Right cardiac atrium (tissue), 5 donors: ENCODE measurements at regions of chr14 and their contacts with region 1.

Region 1: DNA sequence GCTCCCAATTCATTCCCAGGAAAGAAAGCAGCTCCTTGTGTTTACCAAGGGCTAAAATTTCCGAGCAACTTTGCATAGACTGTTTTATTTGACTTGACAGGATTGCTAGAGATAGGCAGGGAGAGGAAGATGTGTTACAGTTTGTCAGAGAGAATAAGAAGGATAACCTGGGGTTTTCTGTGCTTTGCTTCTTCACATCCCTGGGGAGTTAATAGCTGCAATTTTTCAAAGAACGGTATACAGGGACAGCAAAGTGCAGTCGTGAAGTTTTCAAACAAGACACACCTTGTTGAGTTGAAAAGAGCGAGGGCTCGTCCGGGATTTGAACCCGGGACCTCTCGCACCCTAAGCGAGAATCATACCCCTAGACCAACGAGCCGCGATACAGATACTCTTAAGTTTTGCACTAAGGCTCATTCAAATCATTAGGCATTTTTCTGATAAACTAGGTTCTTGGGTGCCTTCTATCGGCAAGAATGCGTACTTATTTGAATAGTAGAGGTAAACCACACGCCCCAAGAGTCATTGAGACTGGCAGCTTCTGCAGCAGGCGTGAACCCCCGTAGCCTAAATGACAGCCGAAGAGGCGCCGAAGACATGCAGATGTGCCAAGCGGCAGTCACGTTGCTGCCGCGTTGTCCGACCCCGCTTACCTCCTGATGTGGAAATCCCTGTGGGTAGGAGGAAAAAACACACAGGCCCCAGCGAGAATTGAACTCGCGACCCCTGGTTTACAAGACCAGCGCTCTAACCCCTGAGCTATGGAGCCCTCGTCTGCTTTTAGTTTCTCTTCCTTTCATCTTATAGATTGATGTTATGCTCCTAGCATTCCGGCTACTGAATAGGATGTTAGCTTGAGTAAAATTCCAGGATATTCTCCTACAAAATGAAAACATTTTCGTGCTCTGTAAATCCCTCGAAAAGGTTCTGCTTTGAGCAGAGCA is 22.2 kb upstream of the RNASE12 start:
- DNase-seq: peak; percentile 81 to 88 (median 85)
- ATAC-seq: peak; percentile 88 to 89
- H3K4me3 ChIP-seq: peak overlapping the region; percentile 67
- H3K27ac ChIP-seq: peak overlapping the region; percentile 89
- H3K4me1 ChIP-seq: no peaks in the 10 kb centered on the region
- H3K27me3 ChIP-seq: no peaks in the 10 kb centered on the region

Region 2: GRCh38 chr14:20327005-20327869 is 286.1 kb before region 1 on chr14:
- intact Hi-C with region 1: loop called in 2 of 4 experiments (anchors 5 to 10 kb)
- DNase-seq: no peak
- ATAC-seq: peak; percentile 47 to 59
- H3K4me3 ChIP-seq: peak overlapping the region; percentile 5
- H3K27ac ChIP-seq: no peak overlapping the region
- H3K4me1 ChIP-seq: no peaks in the 10 kb centered on the region
- H3K27me3 ChIP-seq: no peaks in the 10 kb centered on the region

Region 3: GRCh38 chr14:20343092-20343861 is 270.1 kb before region 1 on chr14 and contains the start of gene PARP2:
- intact Hi-C with region 1: loop called in 2 of 4 experiments (anchors 5 to 10 kb)
- DNase-seq: peak; percentile 98 to 99 (median 99)
- ATAC-seq: peak; percentile 99
- H3K4me3 ChIP-seq: peak within 1 kb of the TSS; percentile 99
- H3K27ac ChIP-seq: peak within 1 kb of the TSS; percentile 79
- H3K4me1 ChIP-seq: no peaks in the 10 kb centered on the region
- H3K27me3 ChIP-seq: no peaks in the 10 kb centered on the region
- total RNA-seq, gene PARP2: 11.9 to 17.9 (median 16.3) TPM

Region 4: GRCh38 chr14:20413045-20413799 is 200.1 kb before region 1 on chr14 and contains the start of gene TEP1:
- intact Hi-C with region 1: loop called in 3 of 4 experiments (anchors 5 to 10 kb)
- DNase-seq: peak; percentile 93 to 97 (median 95)
- ATAC-seq: peak; percentile 97 to 99
- H3K4me3 ChIP-seq: peak within 1 kb of the TSS; percentile 48
- H3K27ac ChIP-seq: peak within 1 kb of the TSS; percentile 85
- H3K4me1 ChIP-seq: peaks cover 2% of the 10 kb centered on the region
- H3K27me3 ChIP-seq: no peaks in the 10 kb centered on the region
- total RNA-seq, gene TEP1: 7.4 to 14.1 (median 13.1) TPM

Region 5: GRCh38 chr14:20530771-20531571 is 82.4 kb before region 1 on chr14:
- intact Hi-C with region 1: loop called in 1 of 4 experiments (anchors 10 kb)
- DNase-seq: peak; percentile 61 to 85 (median 77)
- ATAC-seq: no peak
- H3K4me3 ChIP-seq: no peak overlapping the region
- H3K27ac ChIP-seq: no peak overlapping the region
- H3K4me1 ChIP-seq: no peaks in the 10 kb centered on the region
- H3K27me3 ChIP-seq: no peaks in the 10 kb centered on the region

Region 6: GRCh38 chr14:20682435-20683124 is 69.2 kb after region 1 on chr14:
- intact Hi-C with region 1: loop called (anchors 2 to 5 kb)
- DNase-seq: peak; percentile 93 to 96 (median 95)
- ATAC-seq: peak; percentile 93 to 94
- H3K4me3 ChIP-seq: peak overlapping the region; percentile 81
- H3K27ac ChIP-seq: peak overlapping the region; percentile 99
- H3K4me1 ChIP-seq: peaks cover 6% of the 10 kb centered on the region
- H3K27me3 ChIP-seq: no peaks in the 10 kb centered on the region

Region 7: DNA sequence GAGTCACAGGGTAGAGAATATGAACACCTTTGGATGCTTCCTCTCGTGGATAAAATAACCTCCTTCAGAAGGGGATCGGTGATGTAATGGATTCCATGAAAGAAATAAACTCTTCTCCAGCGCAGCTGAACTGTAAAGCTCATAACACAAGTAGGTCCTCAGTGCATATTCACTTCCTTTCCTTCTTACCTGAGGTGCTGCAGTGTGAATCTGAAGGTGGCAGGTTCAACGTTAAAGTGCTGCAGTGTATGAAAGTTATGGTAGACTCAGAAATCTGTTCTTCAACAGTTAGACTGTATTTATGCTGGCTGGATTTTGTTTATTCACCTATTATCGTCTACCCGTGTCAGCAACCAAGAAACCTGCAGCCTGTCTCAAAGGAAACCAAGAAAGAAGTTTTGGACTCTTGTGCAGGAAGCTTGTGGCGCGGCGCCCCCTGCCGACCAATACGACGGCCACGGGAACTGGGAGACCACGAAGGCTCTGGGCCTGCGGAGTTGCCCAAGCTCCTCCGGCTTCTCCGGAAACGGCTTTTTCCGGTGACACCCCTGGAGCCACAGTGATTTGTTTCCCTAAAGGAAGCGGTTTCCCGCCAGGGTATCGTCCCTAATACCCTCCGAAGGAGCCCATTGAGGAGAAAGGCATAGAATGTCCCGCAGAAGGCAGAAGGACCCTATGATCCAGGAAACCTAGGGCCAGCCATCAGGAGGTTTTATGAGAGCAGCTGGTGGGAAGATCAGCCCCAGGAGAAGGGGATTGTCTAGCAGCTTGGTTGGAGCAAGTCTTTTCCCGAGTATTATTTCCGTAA is 260.2 kb after region 1 on chr14:
- intact Hi-C with region 1: no loop called
- DNase-seq: peak; percentile 91 to 96 (median 96)
- ATAC-seq: peak; percentile 97 to 99
- H3K4me3 ChIP-seq: peak overlapping the region; percentile 30
- H3K27ac ChIP-seq: no peak overlapping the region
- H3K4me1 ChIP-seq: no peaks in the 10 kb centered on the region
- H3K27me3 ChIP-seq: no peaks in the 10 kb centered on the region